ENCODE measurements at regions of chr11 and their contacts with region 1.

Region 1: GRCh38 chr11:62556108-62556871 is 9.7 kb upstream of the AHNAK start:
- DNase-seq: peak; percentile 87
- H3K4me3 ChIP-seq: peak overlapping the region; percentile 7
- H3K27ac ChIP-seq: peak overlapping the region; percentile 92
- H3K4me1 ChIP-seq: peaks cover 51% of the 10 kb centered on the region
- H3K27me3 ChIP-seq: no peaks in the 10 kb centered on the region
- CTCF ChIP-seq: no peak

Region 2: DNA sequence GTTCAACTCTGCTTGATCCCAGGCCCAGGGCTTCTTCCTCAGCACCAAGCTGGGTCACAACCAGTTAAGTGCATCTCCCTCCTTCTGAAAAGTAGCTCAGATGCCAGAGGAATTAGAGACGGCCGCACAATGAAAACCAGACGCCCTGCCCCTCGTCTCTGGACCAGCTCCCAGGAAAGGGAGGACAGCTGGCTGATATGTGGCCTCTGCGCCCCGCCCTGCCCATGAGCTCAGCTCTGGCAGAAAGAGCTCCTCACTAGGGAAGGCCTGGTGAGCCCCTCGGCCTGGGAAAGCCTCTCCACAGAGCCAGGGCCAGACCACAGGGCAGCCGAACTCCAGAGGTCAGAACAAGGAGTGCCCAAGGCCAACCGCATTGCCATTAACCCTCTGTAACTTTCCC is 155.5 kb before region 1 on chr11:
- intact Hi-C with region 1: loop called (anchors 5 kb)
- DNase-seq: peak; percentile 70
- H3K4me3 ChIP-seq: no peak overlapping the region
- H3K27ac ChIP-seq: peak overlapping the region; percentile 47
- H3K4me1 ChIP-seq: no peaks in the 10 kb centered on the region
- H3K27me3 ChIP-seq: no peaks in the 10 kb centered on the region
- CTCF ChIP-seq: no peak

Region 3: GRCh38 chr11:62421996-62422395 is 134.3 kb before region 1 on chr11:
- intact Hi-C with region 1: loop called (anchors 5 kb)
- DNase-seq: no peak
- H3K4me3 ChIP-seq: no peak overlapping the region
- H3K27ac ChIP-seq: no peak overlapping the region
- H3K4me1 ChIP-seq: no peaks in the 10 kb centered on the region
- H3K27me3 ChIP-seq: no peaks in the 10 kb centered on the region
- CTCF ChIP-seq: no peak

Region 4: DNA sequence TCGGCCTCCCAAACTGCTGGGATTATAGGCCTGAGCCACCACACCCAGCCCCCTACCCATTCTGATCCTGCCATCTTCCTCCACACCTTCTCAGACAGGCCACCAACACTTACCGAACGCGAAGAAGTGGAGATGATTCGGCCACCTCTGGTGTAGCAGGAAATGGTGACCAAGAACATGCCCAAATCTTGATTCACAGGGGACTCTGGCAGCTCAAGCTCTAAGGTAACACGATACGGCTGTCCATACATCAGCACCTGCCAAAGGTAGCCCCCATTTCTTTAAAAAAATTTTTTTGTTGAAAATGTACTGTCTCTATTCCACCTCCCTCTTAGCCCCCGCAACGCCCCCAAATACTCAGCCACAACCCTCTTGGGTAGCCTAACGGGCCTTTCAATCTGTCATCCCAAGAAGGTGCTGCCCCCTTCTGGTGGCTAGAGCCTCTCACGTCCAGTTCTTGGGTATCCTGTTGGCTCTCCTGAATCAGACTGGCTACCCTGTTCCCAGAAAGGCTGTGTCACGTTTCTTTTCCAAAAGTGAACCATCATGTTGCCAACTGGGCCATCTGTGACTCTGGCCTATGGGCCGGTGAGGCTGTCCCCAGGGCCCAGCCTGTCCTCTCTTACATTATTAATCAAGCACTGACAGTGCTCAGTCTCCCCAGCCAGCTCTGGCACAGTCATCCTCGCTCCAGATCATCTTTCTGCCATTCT is 138.3 kb after region 1 on chr11:
- intact Hi-C with region 1: no loop called
- DNase-seq: peak; percentile 84
- H3K4me3 ChIP-seq: no peak overlapping the region
- H3K27ac ChIP-seq: no peak overlapping the region
- H3K4me1 ChIP-seq: no peaks in the 10 kb centered on the region
- H3K27me3 ChIP-seq: no peaks in the 10 kb centered on the region
- CTCF ChIP-seq: peak; percentile 81